CD4-positive, alpha-beta memory T cell (primary cell): ENCODE measurements at regions of chr18 and their contacts with region 1.

Region 1: DNA sequence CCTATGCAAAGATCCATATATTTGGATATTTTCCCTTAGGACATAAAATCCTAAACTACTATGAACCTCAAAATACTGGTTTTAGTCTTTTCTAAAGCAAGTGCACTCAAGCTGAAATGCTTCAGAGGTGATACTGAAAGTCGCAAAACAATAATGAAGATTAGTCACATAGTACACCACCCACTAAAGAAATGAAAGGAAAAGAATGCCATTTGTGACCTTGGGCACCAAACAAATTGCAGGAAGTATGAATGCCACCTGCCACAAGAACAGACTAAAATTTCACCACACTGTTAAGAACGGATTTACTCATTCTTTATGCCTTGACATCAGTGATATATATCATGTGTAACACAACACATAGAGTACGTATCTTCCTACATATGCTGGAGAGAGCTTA is 161.5 kb downstream of the ZNF521 start:
- DNase-seq: no peak
- H3K4me3 ChIP-seq: no peak overlapping the region
- H3K4me3 Mint-ChIP-seq: no peak overlapping the region
- H3K27ac ChIP-seq: no peak overlapping the region
- H3K27ac Mint-ChIP-seq: no peak overlapping the region
- H3K4me1 ChIP-seq: no peaks in the 10 kb centered on the region
- H3K4me1 Mint-ChIP-seq: no peaks in the 10 kb centered on the region
- H3K27me3 ChIP-seq: no peaks in the 10 kb centered on the region
- H3K27me3 Mint-ChIP-seq: peaks cover 1 to 2% of the 10 kb centered on the region in 2 donors

Region 2: GRCh38 chr18:26397019-26397418 is 1206.5 kb after region 1 on chr18:
- CTCF ChIA-PET with region 1: no interaction called
- POLR2A ChIA-PET with region 1: no interaction called
- intact Hi-C with region 1: loop called (anchors 5 kb)
- DNase-seq: no peak
- H3K4me3 ChIP-seq: no peak overlapping the region
- H3K4me3 Mint-ChIP-seq: no peak overlapping the region
- H3K27ac ChIP-seq: no peak overlapping the region
- H3K27ac Mint-ChIP-seq: no peak overlapping the region
- H3K4me1 ChIP-seq: no peaks in the 10 kb centered on the region
- H3K4me1 Mint-ChIP-seq: no peaks in the 10 kb centered on the region
- H3K27me3 ChIP-seq: no peaks in the 10 kb centered on the region
- H3K27me3 Mint-ChIP-seq: no peaks in the 10 kb centered on the region